GM18951 (cell line): ENCODE measurements at regions of chr14 and their contacts with region 1.

Region 1: DNA sequence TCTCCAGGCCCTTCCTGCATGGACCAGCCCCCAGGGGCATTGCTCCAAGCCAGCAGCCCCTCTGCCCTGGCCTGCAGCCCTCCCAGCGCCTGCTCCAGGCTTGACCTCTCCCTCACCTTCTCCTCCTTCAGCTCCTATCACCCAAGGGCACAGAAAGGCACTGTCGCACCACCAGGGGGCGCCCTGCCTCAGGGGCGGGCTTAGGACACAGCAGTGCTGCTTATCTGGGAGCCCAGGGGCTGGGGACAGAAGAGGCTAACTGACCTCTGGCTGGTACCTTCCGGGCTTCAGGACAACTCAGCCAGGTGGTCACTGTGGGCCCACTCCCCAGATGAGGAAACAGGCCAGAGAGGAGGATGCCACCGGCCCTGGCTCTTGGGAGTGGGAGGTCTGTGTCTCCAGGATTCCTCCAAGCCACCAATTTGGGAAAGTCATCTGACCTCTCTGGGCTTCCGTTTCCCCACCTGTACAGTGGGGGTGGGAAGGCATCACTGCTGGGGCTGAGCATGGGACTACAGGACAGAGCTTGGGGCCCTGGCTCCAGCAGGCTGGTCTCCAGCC is 25.3 kb upstream of the GPR132 start:
- POLR2A ChIP-seq: no peak

Region 2: DNA sequence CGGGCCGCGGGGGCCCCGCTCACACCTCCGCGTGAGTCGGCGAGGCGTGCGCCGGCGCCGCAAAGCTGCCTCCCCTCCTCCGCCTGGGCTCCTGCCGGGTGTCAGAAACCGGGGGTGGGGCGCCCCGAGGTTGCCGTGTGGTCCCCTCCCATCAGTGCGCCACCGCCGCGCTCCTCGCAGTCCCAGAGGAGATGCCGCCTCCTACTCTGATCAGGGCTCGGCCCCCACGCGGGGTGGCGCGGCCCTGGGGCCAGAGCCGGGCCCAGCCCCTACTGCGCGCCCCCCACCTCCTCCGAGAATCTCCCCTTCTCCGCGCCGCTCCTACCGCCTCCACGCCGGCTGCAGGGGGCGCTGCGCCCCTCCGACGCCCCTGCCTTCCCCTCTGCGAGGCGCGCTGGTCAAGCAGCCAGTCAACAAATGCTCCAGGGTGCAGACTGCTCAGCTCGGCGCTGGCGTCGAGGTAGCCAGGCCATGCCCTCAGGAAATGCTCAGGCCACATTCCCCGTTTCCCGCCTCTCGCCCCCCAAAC is 78.5 kb after region 1 on chr14:
- in situ Hi-C with region 1: loop called (anchors 10 kb)
- POLR2A ChIP-seq: no peak

Region 3: DNA sequence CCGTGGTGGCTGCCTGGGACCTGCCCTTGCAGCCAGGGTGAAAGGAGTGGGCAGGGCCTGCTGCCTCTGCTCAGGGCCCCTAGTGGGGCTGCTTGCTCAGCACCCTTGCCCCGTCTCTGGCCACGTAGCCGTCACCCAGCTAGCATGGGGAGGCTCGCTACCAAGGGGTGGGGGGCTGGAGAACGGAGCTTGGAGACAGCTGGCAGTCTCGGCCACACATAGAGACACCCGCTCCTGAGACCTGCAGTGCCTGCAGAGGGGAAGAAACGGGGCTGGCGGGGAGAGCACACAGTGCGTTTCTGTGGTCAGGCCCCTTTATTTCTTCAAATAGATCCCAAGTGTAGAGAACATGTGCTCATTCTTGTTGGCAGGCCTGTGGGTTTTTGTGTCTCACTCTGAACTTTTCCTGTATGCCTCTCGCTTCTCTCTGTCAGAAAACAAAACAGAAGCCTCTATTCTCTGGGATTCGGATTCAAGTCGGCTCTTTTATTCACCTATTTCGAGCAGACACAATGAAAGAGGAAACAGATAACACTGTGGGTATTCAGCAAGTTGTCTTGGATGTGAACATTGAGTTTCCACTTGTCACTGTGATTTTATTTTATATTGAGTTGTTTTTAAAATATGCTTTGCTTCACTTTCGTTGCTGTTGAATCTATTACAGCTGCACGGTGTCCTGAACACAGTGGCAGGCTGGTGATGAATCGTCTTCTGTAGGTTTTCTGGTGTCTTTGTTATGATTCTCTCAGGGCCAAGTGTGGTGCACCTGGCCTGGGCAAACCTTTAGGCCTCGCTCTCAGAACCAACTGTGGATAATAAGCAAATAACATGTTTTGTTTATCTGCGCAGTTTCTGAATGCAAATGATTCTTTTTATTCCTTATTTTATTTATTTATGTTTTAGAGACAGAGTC is 250.5 kb after region 1 on chr14:
- in situ Hi-C with region 1: loop called (anchors 10 kb)
- POLR2A ChIP-seq: no peak

Region 4: DNA sequence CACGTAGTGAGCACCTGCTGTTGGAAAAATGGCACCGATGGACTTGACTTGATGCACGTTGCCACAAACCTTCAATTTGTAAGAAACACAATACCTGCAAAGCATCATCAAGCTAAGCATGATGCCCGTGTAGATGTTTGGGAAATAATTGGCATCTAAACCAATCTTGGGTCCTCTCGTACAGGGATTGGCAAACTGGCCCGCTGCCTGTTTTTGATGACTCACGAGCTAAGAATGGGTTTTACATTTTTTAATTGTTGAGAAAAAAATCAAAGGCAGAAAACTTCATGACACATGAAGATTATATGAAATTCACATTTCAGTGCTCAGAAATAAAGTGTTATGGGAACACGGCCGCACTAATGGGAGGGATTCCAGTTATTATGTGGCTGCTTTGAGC is 340.0 kb after region 1 on chr14:
- in situ Hi-C with region 1: no loop called
- POLR2A ChIP-seq: no peak